ENCODE measurements at regions of chr1 and their contacts with region 1.

Region 1: GRCh38 chr1:45521398-45522323 is at the start of gene PRDX1:
- DNase-seq: peak; percentile 96
- H3K4me3 Mint-ChIP-seq: peak within 1 kb of the TSS; percentile 92
- H3K27ac Mint-ChIP-seq: peak within 1 kb of the TSS; percentile 96
- H3K4me1 Mint-ChIP-seq: peaks cover 15% of the 10 kb centered on the region
- H3K27me3 Mint-ChIP-seq: no peaks in the 10 kb centered on the region
- CTCF ChIP-seq: no peak
- total RNA-seq, gene PRDX1: 207 and 242 TPM in 2 replicates

Region 2: GRCh38 chr1:45339789-45340570 is 181.7 kb before region 1 on chr1 and contains the starts of genes MUTYH and TOE1:
- CTCF ChIA-PET with region 1: no interaction called
- POLR2A ChIA-PET with region 1: interaction called, 20 read pairs
- intact Hi-C with region 1: no loop called
- DNase-seq: peak; percentile 89
- H3K4me3 Mint-ChIP-seq: peak within 1 kb of the TSS; percentile 93
- H3K27ac Mint-ChIP-seq: peak within 1 kb of the TSS; percentile 93
- H3K4me1 Mint-ChIP-seq: peaks cover 4% of the 10 kb centered on the region
- H3K27me3 Mint-ChIP-seq: no peaks in the 10 kb centered on the region
- CTCF ChIP-seq: no peak
- total RNA-seq, gene MUTYH: 31.2 and 31.3 TPM in 2 replicates
- total RNA-seq, gene TOE1: 11.1 and 13.3 TPM in 2 replicates

Region 3: DNA sequence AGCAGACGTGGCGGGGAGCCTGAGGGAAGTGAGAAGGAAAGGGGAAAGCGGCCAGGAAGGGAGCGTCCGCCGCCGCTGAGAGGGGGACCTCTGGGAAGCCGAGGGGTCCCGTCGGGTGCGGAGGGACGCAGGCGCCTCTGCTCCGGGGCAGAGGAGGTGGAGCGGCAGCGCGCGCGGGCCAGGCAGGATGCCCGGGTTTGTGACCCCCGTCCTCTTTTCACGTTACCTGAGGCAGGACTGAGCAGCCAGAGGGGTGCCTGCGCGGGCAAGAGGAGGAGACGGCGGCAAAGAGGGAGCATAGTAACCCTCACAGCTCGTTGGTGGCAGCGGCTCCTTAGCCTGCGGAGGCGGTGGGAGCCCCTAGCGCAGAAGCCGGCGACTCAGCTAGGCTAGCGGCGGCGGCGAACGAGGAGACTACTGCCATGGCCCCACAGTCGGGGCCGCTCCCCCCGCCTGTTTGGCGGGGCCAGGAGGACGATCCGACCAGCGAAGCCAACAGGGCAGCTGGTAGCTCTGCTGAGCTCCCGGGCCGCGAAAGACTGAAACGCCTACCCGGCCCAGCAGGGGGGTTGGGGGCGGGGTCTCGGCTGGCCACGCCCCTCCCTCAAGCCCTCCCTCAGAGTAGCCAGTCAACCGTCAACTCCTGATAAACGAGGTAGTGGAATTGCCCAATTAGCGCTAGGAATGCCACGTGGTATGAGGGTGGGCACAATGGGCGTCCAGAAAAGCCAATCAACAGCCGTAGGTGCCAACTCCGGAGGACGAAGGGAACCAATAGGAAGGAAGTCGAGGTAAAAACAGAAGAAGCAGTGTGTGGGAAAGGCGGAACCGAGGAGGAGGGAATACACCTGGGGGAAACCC is 30.8 kb before region 1 on chr1 and contains the start of gene TESK2:
- CTCF ChIA-PET with region 1: no interaction called
- POLR2A ChIA-PET with region 1: interaction called, 27 read pairs
- intact Hi-C with region 1: no loop called
- DNase-seq: peak; percentile 100
- H3K4me3 Mint-ChIP-seq: no peak within 1 kb of the TSS
- H3K27ac Mint-ChIP-seq: no peak within 1 kb of the TSS
- H3K4me1 Mint-ChIP-seq: peaks cover 5% of the 10 kb centered on the region
- H3K27me3 Mint-ChIP-seq: no peaks in the 10 kb centered on the region
- CTCF ChIP-seq: no peak
- total RNA-seq, gene TESK2: 0.71 and 1.4 TPM in 2 replicates

Region 4: GRCh38 chr1:45535988-45536766 is 14.5 kb after region 1 on chr1:
- CTCF ChIA-PET with region 1: interaction called, 4 read pairs
- POLR2A ChIA-PET with region 1: interaction called, 40 read pairs
- intact Hi-C with region 1: no loop called
- DNase-seq: no peak
- H3K4me3 Mint-ChIP-seq: no peak overlapping the region
- H3K27ac Mint-ChIP-seq: no peak overlapping the region
- H3K4me1 Mint-ChIP-seq: peaks cover 4% of the 10 kb centered on the region
- H3K27me3 Mint-ChIP-seq: no peaks in the 10 kb centered on the region
- CTCF ChIP-seq: no peak

Region 5: GRCh38 chr1:45550401-45551351 is 29.0 kb after region 1 on chr1 and contains the start of gene AKR1A1:
- CTCF ChIA-PET with region 1: no interaction called
- POLR2A ChIA-PET with region 1: interaction called, 272 read pairs
- intact Hi-C with region 1: loop called (anchors 1 kb)
- DNase-seq: peak; percentile 94
- H3K4me3 Mint-ChIP-seq: peak within 1 kb of the TSS; percentile 97
- H3K27ac Mint-ChIP-seq: peak within 1 kb of the TSS; percentile 94
- H3K4me1 Mint-ChIP-seq: peaks cover 12% of the 10 kb centered on the region
- H3K27me3 Mint-ChIP-seq: no peaks in the 10 kb centered on the region
- CTCF ChIP-seq: no peak
- total RNA-seq, gene AKR1A1: 108 and 142 TPM in 2 replicates

Region 6: DNA sequence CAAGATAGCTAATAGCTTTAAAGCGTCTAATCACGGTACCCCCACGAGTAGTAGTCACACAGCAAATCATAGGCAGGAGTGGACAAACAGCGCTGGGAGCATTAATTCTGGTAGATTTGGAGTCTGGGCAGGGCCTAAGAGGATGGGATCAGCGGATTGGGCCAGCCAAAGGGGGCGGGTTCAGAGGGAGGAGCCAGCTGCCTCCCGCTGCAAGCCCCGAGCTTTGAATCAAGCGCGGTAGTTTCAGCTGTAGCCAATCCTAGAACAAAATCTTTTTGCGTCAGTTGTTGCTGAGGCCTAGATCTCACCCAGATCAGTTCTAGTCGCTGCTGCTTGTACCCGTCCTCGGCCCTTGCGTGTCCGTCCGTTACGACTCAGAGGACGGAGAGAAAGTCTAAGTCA is 61.6 kb after region 1 on chr1:
- CTCF ChIA-PET with region 1: interaction called, 4 read pairs
- POLR2A ChIA-PET with region 1: interaction called, 30 read pairs
- intact Hi-C with region 1: no loop called
- DNase-seq: peak; percentile 97
- H3K4me3 Mint-ChIP-seq: peak overlapping the region; percentile 89
- H3K27ac Mint-ChIP-seq: peak overlapping the region; percentile 68
- H3K4me1 Mint-ChIP-seq: peaks cover 15% of the 10 kb centered on the region
- H3K27me3 Mint-ChIP-seq: no peaks in the 10 kb centered on the region
- CTCF ChIP-seq: no peak

Region 7: GRCh38 chr1:45686317-45687013 is 164.8 kb after region 1 on chr1 and contains the start of gene GPBP1L1:
- CTCF ChIA-PET with region 1: no interaction called
- POLR2A ChIA-PET with region 1: interaction called, 15 read pairs
- intact Hi-C with region 1: loop called (anchors 10 kb)
- DNase-seq: peak; percentile 97
- H3K4me3 Mint-ChIP-seq: peak within 1 kb of the TSS; percentile 91
- H3K27ac Mint-ChIP-seq: peak within 1 kb of the TSS; percentile 100
- H3K4me1 Mint-ChIP-seq: peaks cover 19% of the 10 kb centered on the region
- H3K27me3 Mint-ChIP-seq: no peaks in the 10 kb centered on the region
- CTCF ChIP-seq: no peak
- total RNA-seq, gene GPBP1L1: 105 and 116 TPM in 2 replicates

Region 8: GRCh38 chr1:45994423-45994822 is 472.8 kb after region 1 on chr1:
- CTCF ChIA-PET with region 1: no interaction called
- POLR2A ChIA-PET with region 1: no interaction called
- intact Hi-C with region 1: no loop called
- DNase-seq: no peak
- H3K4me3 Mint-ChIP-seq: no peak overlapping the region
- H3K27ac Mint-ChIP-seq: no peak overlapping the region
- H3K4me1 Mint-ChIP-seq: no peaks in the 10 kb centered on the region
- H3K27me3 Mint-ChIP-seq: no peaks in the 10 kb centered on the region
- CTCF ChIP-seq: no peak

Measured in MCF 10A (cell line).